Mammary epithelial cell (primary cell): ENCODE measurements at regions of chr12 and their contacts with region 1.

Region 1: GRCh38 chr12:120199595-120200306 is 1.2 kb downstream of the RPLP0 start:
- DNase-seq: peak; percentile 58
- H3K4me3 ChIP-seq: peak overlapping the region; percentile 65 to 100 (median 94)
- H3K27ac ChIP-seq: peak overlapping the region; percentile 86
- H3K4me1 ChIP-seq: peaks cover 47% of the 10 kb centered on the region
- H3K27me3 ChIP-seq: no peaks in the 10 kb centered on the region
- CTCF ChIP-seq: no peak

Region 2: DNA sequence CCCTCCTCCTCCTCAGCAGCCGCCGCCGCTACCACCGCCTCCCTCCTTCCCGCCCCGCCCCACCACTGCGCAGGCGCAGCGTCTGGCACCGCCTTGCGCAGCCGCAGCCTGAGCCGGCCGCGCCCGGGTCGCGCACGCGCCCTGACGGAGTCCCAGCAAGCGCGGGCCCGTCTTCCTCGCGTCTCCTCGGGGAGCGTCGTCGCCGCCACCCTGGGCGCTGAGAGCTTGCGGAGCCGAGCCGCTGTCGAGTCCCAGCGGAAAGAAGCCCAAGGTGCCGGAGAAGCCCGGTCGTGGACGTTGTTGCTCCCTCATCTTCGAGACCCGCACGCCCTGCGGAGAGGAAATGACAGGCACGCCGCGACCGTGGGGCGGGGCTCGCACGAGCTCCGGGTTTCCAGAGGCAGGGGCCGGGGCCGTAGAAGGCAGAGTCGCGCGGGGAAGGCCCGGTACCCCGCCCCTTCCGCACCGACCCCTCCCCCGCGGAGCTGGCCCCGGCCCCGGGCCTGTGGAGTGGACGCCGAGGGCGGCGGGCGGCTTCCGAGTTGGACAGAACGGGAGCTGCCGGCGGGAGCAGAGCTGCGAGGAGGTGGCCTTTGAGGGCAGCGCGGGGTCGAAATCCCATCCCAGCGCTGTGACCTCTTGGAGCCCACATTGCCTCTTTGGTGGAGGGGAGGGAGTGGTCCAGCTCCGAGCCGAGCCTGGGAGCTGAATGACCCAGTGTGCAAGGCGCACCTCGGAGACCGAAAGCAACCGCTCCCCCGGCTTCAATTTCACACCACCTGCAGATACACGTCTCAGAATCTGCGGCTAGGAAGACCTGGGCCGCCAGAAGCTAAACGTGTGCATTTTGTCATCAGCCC is 82.7 kb before region 1 on chr12:
- CTCF ChIA-PET with region 1: interaction called, 10 read pairs
- dilution Hi-C with region 1: no loop called
- in situ Hi-C with region 1: no loop called
- intact Hi-C with region 1: no loop called
- DNase-seq: peak; percentile 91
- H3K4me3 ChIP-seq: peak overlapping the region; percentile 61 to 97 (median 95)
- H3K27ac ChIP-seq: peak overlapping the region; percentile 76
- H3K4me1 ChIP-seq: peaks cover 25% of the 10 kb centered on the region
- H3K27me3 ChIP-seq: no peaks in the 10 kb centered on the region
- CTCF ChIP-seq: no peak

Region 3: DNA sequence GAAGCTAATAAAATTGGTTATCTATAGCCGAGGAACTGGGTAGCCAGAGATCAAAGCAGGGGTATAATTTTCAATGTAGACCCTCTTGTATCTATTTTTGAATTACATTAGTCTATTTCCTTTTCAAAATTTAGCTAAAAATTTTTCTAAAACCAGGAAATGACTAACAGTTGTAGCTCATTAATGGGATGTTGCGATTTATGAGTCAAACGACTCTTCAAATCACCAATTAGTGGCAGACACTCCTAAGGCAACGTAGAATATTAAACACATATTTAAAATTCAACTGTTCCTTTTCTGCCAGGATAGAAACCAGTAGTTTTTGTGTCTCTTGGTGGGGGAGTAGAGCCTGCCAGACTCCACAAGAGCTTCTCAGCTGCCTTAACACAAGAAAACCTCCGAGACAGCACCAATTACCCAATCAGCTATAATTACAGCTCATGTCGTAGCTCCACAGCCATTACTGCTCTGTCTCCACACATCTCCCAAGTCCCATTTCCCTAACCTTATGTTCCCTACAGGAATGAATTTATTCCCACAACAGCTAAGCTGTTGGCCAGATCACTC is 32.1 kb before region 1 on chr12:
- CTCF ChIA-PET with region 1: interaction called, 22 read pairs
- dilution Hi-C with region 1: no loop called
- in situ Hi-C with region 1: no loop called
- intact Hi-C with region 1: no loop called
- DNase-seq: no peak
- H3K4me3 ChIP-seq: no peak overlapping the region
- H3K27ac ChIP-seq: no peak overlapping the region
- H3K4me1 ChIP-seq: no peaks in the 10 kb centered on the region
- H3K27me3 ChIP-seq: no peaks in the 10 kb centered on the region
- CTCF ChIP-seq: no peak

Region 4: GRCh38 chr12:120234643-120235368 is 35.1 kb after region 1 on chr12:
- CTCF ChIA-PET with region 1: interaction called, 10 read pairs
- dilution Hi-C with region 1: no loop called
- in situ Hi-C with region 1: no loop called
- intact Hi-C with region 1: no loop called
- DNase-seq: peak; percentile 86
- H3K4me3 ChIP-seq: no peak overlapping the region
- H3K27ac ChIP-seq: peak overlapping the region; percentile 60
- H3K4me1 ChIP-seq: peaks cover 93% of the 10 kb centered on the region
- H3K27me3 ChIP-seq: no peaks in the 10 kb centered on the region
- CTCF ChIP-seq: peak; percentile 35 to 61

Region 5: GRCh38 chr12:120252071-120252906 is 52.5 kb after region 1 on chr12:
- CTCF ChIA-PET with region 1: no interaction called
- dilution Hi-C with region 1: no loop called
- in situ Hi-C with region 1: no loop called
- intact Hi-C with region 1: no loop called
- DNase-seq: no peak
- H3K4me3 ChIP-seq: no peak overlapping the region
- H3K27ac ChIP-seq: no peak overlapping the region
- H3K4me1 ChIP-seq: peaks cover 68% of the 10 kb centered on the region
- H3K27me3 ChIP-seq: no peaks in the 10 kb centered on the region
- CTCF ChIP-seq: no peak

Region 6: GRCh38 chr12:120286796-120287465 is 87.2 kb after region 1 on chr12:
- CTCF ChIA-PET with region 1: interaction called, 27 read pairs
- dilution Hi-C with region 1: no loop called
- in situ Hi-C with region 1: no loop called
- intact Hi-C with region 1: loop called (anchors 1 kb)
- DNase-seq: peak; percentile 44
- H3K4me3 ChIP-seq: no peak overlapping the region
- H3K27ac ChIP-seq: no peak overlapping the region
- H3K4me1 ChIP-seq: peaks cover 6% of the 10 kb centered on the region
- H3K27me3 ChIP-seq: no peaks in the 10 kb centered on the region
- CTCF ChIP-seq: no peak

Region 7: DNA sequence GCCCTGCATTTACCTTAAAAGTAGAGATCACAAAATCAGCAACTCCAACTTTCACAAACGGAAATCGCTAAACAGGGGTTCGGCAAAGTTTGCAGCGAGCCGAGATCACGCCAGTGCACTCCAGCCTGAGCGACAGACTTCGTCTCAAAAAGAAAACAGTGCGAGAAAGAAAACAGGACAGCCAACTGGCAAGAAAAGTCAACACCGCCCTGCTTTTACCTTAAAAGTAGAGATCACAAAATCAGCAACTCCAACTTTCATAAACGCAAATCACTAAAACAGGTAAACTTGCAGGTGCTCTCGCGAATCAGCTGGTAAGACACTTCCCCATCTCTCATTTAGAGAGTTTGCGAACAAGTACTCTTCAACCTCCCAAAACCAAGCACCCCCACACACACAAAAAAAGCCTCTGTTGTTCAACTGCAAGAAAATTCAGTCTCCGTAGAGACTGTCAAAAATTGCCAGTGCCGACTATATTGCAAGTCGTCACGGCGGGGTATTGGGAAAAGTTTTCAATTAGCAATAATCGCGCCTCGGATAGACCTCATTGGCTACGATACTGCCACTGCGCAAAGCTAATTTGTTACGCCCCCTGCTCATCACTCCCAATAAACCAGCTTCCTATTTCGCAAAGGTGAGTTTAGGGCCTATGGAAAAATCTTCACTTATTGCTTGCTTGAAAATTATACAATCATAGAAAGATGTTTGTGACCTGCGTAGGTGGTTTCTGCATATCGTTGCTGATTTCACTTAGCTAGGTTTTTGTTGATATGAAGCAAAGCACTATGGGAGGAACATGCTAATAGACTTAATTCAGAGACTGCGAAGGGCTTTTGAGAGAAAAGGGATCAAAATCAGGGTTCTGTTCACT is 93.1 kb after region 1 on chr12 and contains the start of gene RNU4-1:
- CTCF ChIA-PET with region 1: interaction called, 27 read pairs
- dilution Hi-C with region 1: no loop called
- in situ Hi-C with region 1: no loop called
- intact Hi-C with region 1: loop called (anchors 1 kb)
- DNase-seq: peak; percentile 99
- H3K4me3 ChIP-seq: peak within 1 kb of the TSS; percentile 11 to 51 (median 16)
- H3K27ac ChIP-seq: peak within 1 kb of the TSS; percentile 100
- H3K4me1 ChIP-seq: peaks cover 4% of the 10 kb centered on the region
- H3K27me3 ChIP-seq: no peaks in the 10 kb centered on the region
- CTCF ChIP-seq: no peak
- total RNA-seq, gene RNU4-1: under 0.01 to 1,952 TPM

Region 8: GRCh38 chr12:120356567-120357030 is 156.8 kb after region 1 on chr12:
- CTCF ChIA-PET with region 1: no interaction called
- dilution Hi-C with region 1: no loop called
- in situ Hi-C with region 1: no loop called
- intact Hi-C with region 1: no loop called
- DNase-seq: peak; percentile 91
- H3K4me3 ChIP-seq: peak overlapping the region in 2 of 3 experiments; percentile 15 to 17
- H3K27ac ChIP-seq: no peak overlapping the region
- H3K4me1 ChIP-seq: peaks cover 5% of the 10 kb centered on the region
- H3K27me3 ChIP-seq: no peaks in the 10 kb centered on the region
- CTCF ChIP-seq: peak; percentile 91 to 95